ENCODE measurements at regions of chr12 and their contacts with region 1.

Region 1: GRCh38 chr12:49130151-49131050 is 794 bp downstream of the TUBA1B start:
- DNase-seq: peak; percentile 91
- ATAC-seq: peak; percentile 50
- H3K4me3 Mint-ChIP-seq: peak overlapping the region; percentile 96
- H3K27ac Mint-ChIP-seq: peak overlapping the region; percentile 98
- H3K4me1 Mint-ChIP-seq: peaks cover 55% of the 10 kb centered on the region
- H3K27me3 Mint-ChIP-seq: no peaks in the 10 kb centered on the region
- CTCF ChIP-seq: no peak

Region 2: DNA sequence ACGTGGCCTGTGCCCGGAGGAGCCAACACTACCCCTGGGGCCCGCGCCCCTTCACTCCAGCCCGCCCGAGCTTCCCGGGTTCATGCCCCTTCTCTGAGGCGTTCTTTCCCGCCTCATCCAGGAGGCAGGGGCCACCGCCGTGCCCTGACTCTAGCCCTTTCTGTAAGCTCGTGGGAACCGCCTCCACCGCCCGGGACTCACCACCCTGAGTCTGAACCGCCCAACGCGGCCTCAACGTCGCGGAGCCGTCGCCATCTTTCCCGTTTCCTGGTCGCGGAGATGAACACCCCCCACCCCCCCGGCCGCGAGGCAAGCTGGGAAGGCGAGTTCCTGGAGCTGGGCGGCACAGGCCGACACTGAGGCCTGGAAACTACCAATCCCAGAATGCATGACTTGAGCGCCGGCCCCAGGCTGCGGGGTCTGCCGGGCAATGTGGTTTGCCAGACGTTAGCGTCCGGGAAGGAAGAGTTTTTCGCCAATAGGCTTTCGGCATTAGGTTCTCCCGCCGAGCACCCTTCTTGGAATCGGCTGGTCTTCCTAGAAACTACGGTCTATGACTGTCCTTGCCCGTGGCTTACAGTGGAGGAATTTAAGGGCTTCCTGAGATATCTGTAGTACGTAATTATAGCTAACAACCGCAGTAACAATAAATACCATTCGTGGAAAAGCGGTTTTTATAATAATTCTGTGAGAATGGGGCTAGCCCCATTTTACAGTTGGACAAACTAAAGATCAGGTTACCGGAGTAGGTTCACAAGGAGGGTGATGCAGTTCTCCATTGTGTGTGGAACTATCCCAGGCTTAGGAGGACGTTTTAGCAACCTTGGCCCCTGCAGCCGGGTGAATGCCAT is 278.3 kb before region 1 on chr12 and contains the start of gene DDX23:
- CTCF ChIA-PET with region 1: no interaction called
- POLR2A ChIA-PET with region 1: interaction called, 18 read pairs
- intact Hi-C with region 1: loop called (anchors 5 kb)
- DNase-seq: peak; percentile 75
- ATAC-seq: peak; percentile 98
- H3K4me3 Mint-ChIP-seq: peak within 1 kb of the TSS; percentile 98
- H3K27ac Mint-ChIP-seq: peak within 1 kb of the TSS; percentile 93
- H3K4me1 Mint-ChIP-seq: peaks cover 36% of the 10 kb centered on the region
- H3K27me3 Mint-ChIP-seq: no peaks in the 10 kb centered on the region
- CTCF ChIP-seq: no peak
- total RNA-seq, gene DDX23: 116 and 118 TPM in 2 replicates

Region 3: DNA sequence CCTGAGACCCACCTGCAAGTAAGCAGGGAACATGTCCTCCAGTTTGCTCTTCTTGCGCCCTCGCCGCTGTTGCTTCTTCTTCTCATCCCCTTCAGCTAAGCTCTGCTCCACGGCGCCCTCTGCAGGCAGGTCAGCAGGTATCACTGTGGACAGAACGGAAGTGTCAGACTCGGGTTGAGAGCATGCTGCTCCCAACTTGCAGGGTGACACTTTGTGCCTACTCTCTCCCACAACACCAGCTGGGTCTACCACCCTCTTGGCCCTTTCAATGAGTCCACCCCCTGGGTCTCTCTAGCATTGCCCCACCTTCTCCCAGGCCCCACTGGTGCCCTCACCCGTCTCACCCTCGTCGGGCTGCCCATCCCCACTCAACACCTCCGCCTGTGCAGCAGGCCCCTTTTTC is 86.5 kb before region 1 on chr12:
- CTCF ChIA-PET with region 1: no interaction called
- POLR2A ChIA-PET with region 1: no interaction called
- intact Hi-C with region 1: no loop called
- DNase-seq: peak; percentile 63
- ATAC-seq: peak; percentile 81
- H3K4me3 Mint-ChIP-seq: no peak overlapping the region
- H3K27ac Mint-ChIP-seq: no peak overlapping the region
- H3K4me1 Mint-ChIP-seq: no peaks in the 10 kb centered on the region
- H3K27me3 Mint-ChIP-seq: no peaks in the 10 kb centered on the region
- CTCF ChIP-seq: no peak

Region 4: GRCh38 chr12:49060237-49061156 is 69.9 kb before region 1 on chr12 and contains the start of gene KMT2D:
- CTCF ChIA-PET with region 1: interaction called, 5 read pairs
- POLR2A ChIA-PET with region 1: interaction called, 12 read pairs
- intact Hi-C with region 1: loop called (anchors 1 kb)
- DNase-seq: peak; percentile 83
- ATAC-seq: peak; percentile 67
- H3K4me3 Mint-ChIP-seq: peak within 1 kb of the TSS; percentile 97
- H3K27ac Mint-ChIP-seq: peak within 1 kb of the TSS; percentile 97
- H3K4me1 Mint-ChIP-seq: peaks cover 50% of the 10 kb centered on the region
- H3K27me3 Mint-ChIP-seq: no peaks in the 10 kb centered on the region
- CTCF ChIP-seq: no peak
- total RNA-seq, gene KMT2D: 127 and 136 TPM in 2 replicates

Region 5: DNA sequence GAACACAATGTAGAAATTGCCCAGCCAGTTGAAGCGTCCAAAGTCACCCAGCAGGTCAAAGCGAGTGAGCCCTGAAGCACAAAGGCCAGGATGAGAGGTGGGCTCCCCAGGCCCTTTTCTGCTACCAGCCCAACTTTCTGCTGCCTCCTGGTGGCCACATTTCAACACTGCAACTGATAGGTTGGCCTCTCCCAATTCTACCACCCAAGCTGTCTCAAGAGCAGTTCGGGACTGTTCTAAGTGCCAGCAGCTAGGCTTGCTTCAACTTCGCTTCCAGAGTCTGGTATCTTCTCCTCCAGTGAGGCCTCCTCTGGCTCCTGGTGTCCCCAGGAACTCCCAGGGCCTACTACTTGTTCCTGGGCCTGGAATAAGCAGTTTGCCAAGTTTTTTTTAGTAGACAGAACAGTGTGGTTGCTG is 32.4 kb before region 1 on chr12:
- CTCF ChIA-PET with region 1: interaction called, 5 read pairs
- POLR2A ChIA-PET with region 1: interaction called, 14 read pairs
- intact Hi-C with region 1: no loop called
- DNase-seq: peak; percentile 48
- ATAC-seq: peak; percentile 71
- H3K4me3 Mint-ChIP-seq: no peak overlapping the region
- H3K27ac Mint-ChIP-seq: no peak overlapping the region
- H3K4me1 Mint-ChIP-seq: peaks cover 17% of the 10 kb centered on the region
- H3K27me3 Mint-ChIP-seq: peaks cover 16% of the 10 kb centered on the region
- CTCF ChIP-seq: no peak

Region 6: DNA sequence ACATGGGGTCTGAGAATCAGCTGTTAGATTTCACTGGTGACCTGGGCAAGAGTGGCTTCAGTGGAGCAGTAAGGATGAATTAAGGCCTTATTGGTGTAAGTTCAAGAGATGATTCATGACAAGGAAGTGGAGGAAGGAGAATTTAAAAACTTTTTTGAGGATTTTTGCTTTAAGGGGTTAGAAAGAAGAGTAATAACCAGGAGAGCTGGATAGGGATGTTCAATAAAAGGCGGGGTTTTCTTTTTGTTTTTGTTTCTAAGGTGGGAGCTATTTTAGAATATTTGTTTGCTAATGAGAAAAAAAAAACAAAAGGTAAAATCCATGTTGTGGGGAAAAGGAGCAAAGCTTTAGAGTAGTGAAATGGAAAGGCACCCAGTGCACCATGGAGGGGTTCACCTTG is 16.0 kb after region 1 on chr12:
- CTCF ChIA-PET with region 1: interaction called, 3 read pairs
- POLR2A ChIA-PET with region 1: interaction called, 15 read pairs
- intact Hi-C with region 1: no loop called
- DNase-seq: no peak
- ATAC-seq: no peak
- H3K4me3 Mint-ChIP-seq: no peak overlapping the region
- H3K27ac Mint-ChIP-seq: no peak overlapping the region
- H3K4me1 Mint-ChIP-seq: peaks cover 4% of the 10 kb centered on the region
- H3K27me3 Mint-ChIP-seq: no peaks in the 10 kb centered on the region
- CTCF ChIP-seq: no peak

Region 7: DNA sequence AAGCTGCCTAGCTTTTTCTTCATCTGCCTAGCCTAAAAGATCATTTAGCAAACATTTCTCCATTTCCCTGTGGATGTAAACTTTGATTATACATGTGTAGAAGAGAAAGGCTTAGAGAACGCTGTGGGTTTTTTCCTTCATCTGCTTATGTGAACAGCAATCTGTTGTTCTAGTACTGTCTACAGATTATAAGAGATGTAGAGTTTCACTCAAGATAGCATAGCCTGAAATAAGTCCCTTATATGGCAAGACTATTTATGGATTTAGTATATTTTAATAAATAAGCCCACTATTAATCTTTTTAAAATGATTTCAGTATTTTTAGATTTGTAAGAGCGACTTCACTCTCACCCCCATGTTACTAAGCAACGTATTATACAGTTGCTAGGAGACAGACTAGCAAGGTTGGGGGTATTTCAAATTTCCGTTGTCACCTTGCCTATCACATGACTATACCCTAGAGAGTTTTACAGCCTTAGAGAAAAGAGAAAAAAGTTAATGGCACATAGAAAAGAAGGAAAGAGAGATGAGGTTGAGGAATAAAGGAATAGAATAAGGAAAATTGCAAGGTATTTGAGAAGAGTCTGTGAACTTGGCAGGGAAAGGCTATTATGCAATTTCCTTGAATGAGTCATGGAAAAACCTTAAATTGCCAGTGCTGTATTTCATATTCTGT is 70.7 kb after region 1 on chr12:
- CTCF ChIA-PET with region 1: no interaction called
- POLR2A ChIA-PET with region 1: interaction called, 15 read pairs
- intact Hi-C with region 1: no loop called
- DNase-seq: no peak
- ATAC-seq: peak; percentile 92
- H3K4me3 Mint-ChIP-seq: peak overlapping the region; percentile 5
- H3K27ac Mint-ChIP-seq: no peak overlapping the region
- H3K4me1 Mint-ChIP-seq: peaks cover 11% of the 10 kb centered on the region
- H3K27me3 Mint-ChIP-seq: no peaks in the 10 kb centered on the region
- CTCF ChIP-seq: no peak

Region 8: DNA sequence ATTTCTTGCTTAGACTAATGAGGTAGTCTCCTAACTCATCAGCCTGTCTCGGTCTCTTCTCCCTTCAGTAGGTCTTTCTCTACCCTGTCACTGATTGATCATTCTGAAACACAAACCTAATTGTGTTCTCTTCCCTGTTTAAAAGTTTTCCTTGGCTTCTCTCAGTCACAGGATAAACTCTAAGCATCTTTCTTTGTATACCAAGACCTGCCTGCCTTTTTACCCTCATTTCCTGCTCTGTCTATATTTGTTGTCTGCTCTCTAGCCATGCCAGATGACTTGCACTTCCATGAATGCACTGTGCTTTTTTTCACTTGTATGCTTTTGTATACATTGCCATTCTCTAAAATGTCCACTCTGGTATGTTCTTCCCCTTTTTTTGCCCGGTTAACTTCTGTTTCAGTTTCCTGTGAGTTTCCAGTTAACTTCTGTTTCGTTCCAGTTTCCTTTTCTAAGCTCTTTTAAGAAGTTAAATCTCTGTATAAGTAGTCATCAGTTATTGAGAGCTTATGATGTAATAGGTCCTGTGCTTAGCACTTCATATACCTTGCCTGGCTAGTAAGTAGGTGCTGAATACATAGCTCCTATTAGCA is 1387.2 kb after region 1 on chr12:
- CTCF ChIA-PET with region 1: no interaction called
- POLR2A ChIA-PET with region 1: no interaction called
- intact Hi-C with region 1: no loop called
- DNase-seq: no peak
- ATAC-seq: peak; percentile 75
- H3K4me3 Mint-ChIP-seq: no peak overlapping the region
- H3K27ac Mint-ChIP-seq: no peak overlapping the region
- H3K4me1 Mint-ChIP-seq: peaks cover 44% of the 10 kb centered on the region
- H3K27me3 Mint-ChIP-seq: no peaks in the 10 kb centered on the region
- CTCF ChIP-seq: no peak

Region 9: DNA sequence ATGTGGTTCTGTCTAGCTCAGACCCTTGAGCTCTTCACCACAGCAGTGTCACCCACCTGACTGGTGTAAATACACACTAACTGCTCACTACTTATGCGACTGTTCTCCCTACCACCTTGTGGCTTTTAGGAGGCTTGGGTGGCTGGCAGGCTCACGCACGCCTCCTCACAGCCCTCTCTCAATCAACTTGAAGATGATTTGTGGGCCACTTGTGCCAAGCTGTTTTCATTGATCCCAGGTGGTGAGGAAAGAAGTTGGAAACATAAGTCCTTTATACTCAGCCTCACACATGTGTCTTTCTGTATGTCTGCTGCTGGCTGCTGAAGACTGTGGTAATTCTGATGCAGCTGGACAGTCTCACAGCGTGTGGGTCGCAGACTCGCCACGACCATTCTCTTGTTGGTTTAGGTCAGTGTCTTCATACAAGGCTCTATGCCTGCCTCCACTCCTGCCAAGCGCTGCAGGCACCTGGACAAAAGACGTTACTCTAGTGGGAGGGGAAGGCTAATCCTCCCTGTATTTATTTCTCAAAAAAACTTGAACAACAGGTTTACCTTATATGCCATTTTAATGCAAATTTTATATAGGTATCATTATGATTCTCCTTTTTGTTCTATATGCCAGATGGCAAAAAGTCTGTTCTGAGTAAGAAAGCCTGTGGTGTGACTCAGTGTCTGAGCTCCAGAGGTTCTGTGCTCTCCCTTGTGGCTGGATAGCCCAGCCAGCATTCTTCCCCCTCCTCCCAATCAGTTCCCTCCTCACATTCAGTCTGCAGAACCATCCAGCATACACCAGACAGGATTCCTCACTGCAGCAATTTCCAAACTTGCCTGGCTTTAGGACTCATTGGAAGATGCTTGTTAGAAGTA is 1489.9 kb after region 1 on chr12:
- CTCF ChIA-PET with region 1: no interaction called
- POLR2A ChIA-PET with region 1: no interaction called
- intact Hi-C with region 1: no loop called
- DNase-seq: no peak
- ATAC-seq: no peak
- H3K4me3 Mint-ChIP-seq: no peak overlapping the region
- H3K27ac Mint-ChIP-seq: peak overlapping the region; percentile 47
- H3K4me1 Mint-ChIP-seq: peaks cover 75% of the 10 kb centered on the region
- H3K27me3 Mint-ChIP-seq: no peaks in the 10 kb centered on the region
- CTCF ChIP-seq: no peak